ENCODE measurements at regions of chr3 and their contacts with region 1.

Region 1: DNA sequence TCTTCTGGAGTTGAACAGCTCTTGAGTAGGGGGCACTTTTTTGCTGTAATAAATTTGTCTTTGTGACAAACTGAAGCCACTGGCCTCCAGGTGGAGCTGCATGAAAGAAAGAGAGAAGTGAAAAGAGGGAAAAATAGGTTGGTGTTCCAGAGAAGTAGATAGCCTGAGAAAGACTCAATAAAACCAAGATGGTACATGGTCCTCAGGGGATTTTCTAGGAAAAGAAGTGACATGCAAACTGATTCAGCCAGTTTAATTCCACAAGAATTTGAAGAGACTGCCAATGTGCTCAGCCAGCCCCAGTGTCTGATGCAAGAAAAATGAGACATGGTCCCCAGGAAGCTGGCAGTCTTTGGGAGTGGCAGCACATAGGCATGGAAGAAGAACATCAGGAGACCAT is 152.7 kb downstream of the CD47 start:
- DNase-seq: peak in 2 of 3 donors; percentile 21 to 52
- ATAC-seq: peak in 1 of 2 donors; percentile 70
- H3K4me3 ChIP-seq: no peak overlapping the region
- H3K27ac ChIP-seq: no peak overlapping the region
- H3K4me1 ChIP-seq: no peaks in the 10 kb centered on the region
- H3K27me3 ChIP-seq: no peaks in the 10 kb centered on the region

Region 2: DNA sequence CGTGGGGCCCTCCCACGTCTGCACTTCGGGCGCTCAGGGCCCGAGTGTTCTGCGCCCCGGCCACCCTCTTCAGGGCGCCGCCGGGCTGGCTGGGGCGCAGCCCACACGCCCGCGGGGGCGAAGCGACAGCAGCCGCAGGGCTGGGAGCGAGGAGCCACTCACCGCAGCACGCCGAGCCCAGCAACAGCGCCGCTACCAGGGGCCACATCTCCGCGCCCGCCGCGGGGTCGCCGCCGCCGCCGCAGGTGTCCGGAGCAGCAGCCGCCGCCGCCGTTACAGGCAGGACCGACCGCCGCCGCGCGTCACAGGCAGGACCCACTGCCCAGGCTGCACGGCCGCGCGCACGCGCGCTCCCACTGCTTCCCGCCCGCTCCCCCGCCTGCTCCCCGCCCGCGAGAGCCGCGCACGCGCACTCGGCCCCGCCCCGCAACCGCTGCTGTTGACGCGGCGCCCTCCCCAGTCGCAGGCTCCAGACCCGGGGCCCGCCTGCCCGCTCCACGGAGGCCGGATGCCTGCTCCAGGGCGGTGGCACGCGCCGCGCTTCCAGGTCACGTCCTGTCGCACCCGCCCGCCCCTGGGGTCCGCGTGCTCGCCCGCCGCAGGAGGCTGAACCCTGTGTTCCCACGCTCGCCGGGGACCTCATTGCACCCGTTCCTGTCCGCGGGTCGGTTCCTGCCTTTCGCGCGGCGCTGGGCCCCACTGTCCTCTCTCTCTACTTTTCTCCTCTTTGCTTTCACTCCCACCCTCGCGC is 152.7 kb after region 1 on chr3 and contains the start of gene CD47:
- intact Hi-C with region 1: loop called in 2 of 4 experiments (anchors 10 kb)
- DNase-seq: peak; percentile 96 to 99 (median 98)
- ATAC-seq: peak; percentile 96 to 97
- H3K4me3 ChIP-seq: peak within 1 kb of the TSS; percentile 81
- H3K27ac ChIP-seq: peak within 1 kb of the TSS; percentile 16
- H3K4me1 ChIP-seq: no peaks in the 10 kb centered on the region
- H3K27me3 ChIP-seq: no peaks in the 10 kb centered on the region
- total RNA-seq, gene CD47: 53.5 to 96.6 (median 72.1) TPM

Region 3: GRCh38 chr3:108359011-108359410 is 420.9 kb after region 1 on chr3:
- intact Hi-C with region 1: no loop called
- DNase-seq: no peak
- ATAC-seq: no peak
- H3K4me3 ChIP-seq: no peak overlapping the region
- H3K27ac ChIP-seq: no peak overlapping the region
- H3K4me1 ChIP-seq: no peaks in the 10 kb centered on the region
- H3K27me3 ChIP-seq: no peaks in the 10 kb centered on the region

Region 4: DNA sequence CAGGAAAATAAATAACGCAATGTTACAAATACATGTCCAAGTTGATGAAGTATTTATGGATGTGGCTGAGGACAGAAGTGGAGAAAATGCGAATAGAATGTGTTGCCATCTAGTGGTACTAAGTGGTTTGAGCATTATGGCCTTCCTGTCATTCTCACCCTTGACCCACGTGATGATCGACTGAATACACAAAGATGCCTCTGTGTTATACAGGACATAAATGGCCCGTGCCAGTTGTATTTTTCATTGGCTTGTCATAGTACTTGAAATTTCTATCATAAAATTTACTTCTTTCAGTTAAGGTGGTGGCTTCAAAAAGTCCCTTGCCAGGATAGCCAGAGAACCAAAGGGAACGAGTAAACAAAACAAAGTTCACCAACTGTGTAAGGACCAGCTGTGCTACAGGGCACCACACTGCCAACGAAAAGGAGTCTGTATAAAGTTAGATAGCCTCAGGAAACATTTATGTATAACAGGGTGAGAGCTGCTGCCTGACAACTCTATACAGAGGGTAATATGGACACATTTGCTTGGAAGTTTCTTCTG is 468.6 kb after region 1 on chr3:
- intact Hi-C with region 1: loop called in 1 of 4 experiments (anchors 10 kb)
- DNase-seq: no peak
- ATAC-seq: peak; percentile 63 to 81
- H3K4me3 ChIP-seq: no peak overlapping the region
- H3K27ac ChIP-seq: no peak overlapping the region
- H3K4me1 ChIP-seq: no peaks in the 10 kb centered on the region
- H3K27me3 ChIP-seq: no peaks in the 10 kb centered on the region

Region 5: GRCh38 chr3:108477511-108478147 is 539.5 kb after region 1 on chr3:
- intact Hi-C with region 1: loop called in 1 of 4 experiments (anchors 5 kb)
- DNase-seq: peak in 2 of 3 donors; percentile 50 to 53
- ATAC-seq: peak; percentile 64 to 76
- H3K4me3 ChIP-seq: no peak overlapping the region
- H3K27ac ChIP-seq: no peak overlapping the region
- H3K4me1 ChIP-seq: no peaks in the 10 kb centered on the region
- H3K27me3 ChIP-seq: no peaks in the 10 kb centered on the region